Activated CD8-positive, alpha-beta T cell treated with anti-CD3 and anti-CD28 coated beads for 36 hours (primary cell): ENCODE measurements at regions of chr11 and their contacts with region 1.

Region 1: DNA sequence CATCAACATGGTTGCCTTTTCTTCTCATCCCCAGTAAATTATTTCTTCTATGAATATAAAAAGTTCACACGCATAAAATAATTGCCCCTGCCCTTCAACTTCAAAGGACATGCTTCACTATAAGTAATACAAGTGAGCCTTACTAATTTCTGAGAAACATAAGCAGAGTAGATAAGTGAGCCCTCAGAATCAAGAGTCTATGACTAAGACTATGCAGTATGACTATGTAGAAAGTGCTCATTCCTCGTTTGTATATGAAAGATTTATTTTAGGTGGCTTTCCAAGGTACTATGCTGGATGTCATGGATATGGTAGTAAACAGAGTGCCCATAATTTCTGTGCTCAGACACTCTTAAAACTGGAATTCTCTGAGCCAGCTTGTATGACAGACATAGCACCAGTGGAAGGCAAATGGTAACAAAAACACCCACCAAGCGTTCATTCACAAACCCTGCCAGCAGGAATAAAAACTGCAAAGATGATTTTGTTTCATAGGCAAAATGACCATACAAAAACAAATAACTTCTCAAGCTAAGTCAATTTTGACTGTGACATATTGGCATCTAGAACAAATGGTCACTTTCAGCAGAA is 189.8 kb downstream of the CADM1 start:
- DNase-seq: no peak
- ATAC-seq: no peak
- H3K4me3 Mint-ChIP-seq: no peak overlapping the region
- H3K27ac Mint-ChIP-seq: no peak overlapping the region
- H3K4me1 Mint-ChIP-seq: no peaks in the 10 kb centered on the region
- H3K27me3 Mint-ChIP-seq: peaks cover 3% of the 10 kb centered on the region
- CTCF ChIP-seq: no peak

Region 2: GRCh38 chr11:115324581-115325432 is 10.4 kb after region 1 on chr11:
- CTCF ChIA-PET with region 1: interaction called, 12 read pairs
- POLR2A ChIA-PET with region 1: no interaction called
- intact Hi-C with region 1: no loop called
- DNase-seq: peak; percentile 27
- ATAC-seq: peak; percentile 67
- H3K4me3 Mint-ChIP-seq: no peak overlapping the region
- H3K27ac Mint-ChIP-seq: no peak overlapping the region
- H3K4me1 Mint-ChIP-seq: no peaks in the 10 kb centered on the region
- H3K27me3 Mint-ChIP-seq: peaks cover 4% of the 10 kb centered on the region
- CTCF ChIP-seq: peak; percentile 79

Region 3: DNA sequence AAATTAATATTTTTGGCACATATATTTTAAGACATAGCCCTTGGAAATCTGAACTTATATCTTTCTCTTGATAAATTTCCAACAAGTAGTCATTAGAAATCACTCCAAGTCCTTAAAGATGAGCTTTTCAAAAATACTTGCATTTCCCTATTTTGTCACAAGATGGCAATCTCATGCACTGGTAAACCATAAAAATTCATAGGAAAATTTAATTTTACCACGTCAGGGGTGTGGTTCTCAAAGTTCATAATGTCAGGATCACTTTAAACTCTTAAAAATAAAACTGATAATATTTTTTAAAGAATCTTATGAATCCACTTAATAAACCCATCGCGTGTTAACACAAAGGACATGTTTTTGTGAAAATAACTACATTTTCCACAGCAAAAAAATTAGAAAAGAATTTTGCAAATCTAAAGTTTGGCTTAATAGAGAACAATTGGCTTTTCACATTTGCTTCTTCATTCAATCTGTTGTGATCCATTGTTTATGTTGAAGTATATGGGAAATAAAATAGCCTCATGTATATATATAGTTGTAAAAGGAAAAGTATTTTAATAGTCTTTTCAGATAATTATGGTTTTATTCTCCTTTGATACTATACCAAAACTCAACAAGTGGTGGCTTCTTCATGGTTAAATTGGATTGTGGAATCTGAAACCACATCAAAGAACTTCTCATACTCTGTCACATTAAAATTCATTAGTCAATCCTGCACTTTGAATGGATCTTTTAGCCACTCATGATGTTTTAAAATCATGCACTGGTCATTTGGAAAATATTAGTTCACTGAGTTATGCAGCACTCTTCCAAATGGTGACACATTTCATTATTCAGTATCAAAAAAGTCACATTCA is 20.7 kb after region 1 on chr11:
- CTCF ChIA-PET with region 1: no interaction called
- POLR2A ChIA-PET with region 1: no interaction called
- intact Hi-C with region 1: no loop called
- DNase-seq: no peak
- ATAC-seq: no peak
- H3K4me3 Mint-ChIP-seq: no peak overlapping the region
- H3K27ac Mint-ChIP-seq: no peak overlapping the region
- H3K4me1 Mint-ChIP-seq: no peaks in the 10 kb centered on the region
- H3K27me3 Mint-ChIP-seq: no peaks in the 10 kb centered on the region
- CTCF ChIP-seq: peak; percentile 80

Region 4: GRCh38 chr11:115548878-115549528 is 234.6 kb after region 1 on chr11:
- CTCF ChIA-PET with region 1: no interaction called
- POLR2A ChIA-PET with region 1: no interaction called
- intact Hi-C with region 1: no loop called
- DNase-seq: no peak
- ATAC-seq: no peak
- H3K4me3 Mint-ChIP-seq: no peak overlapping the region
- H3K27ac Mint-ChIP-seq: no peak overlapping the region
- H3K4me1 Mint-ChIP-seq: no peaks in the 10 kb centered on the region
- H3K27me3 Mint-ChIP-seq: peaks cover 1% of the 10 kb centered on the region
- CTCF ChIP-seq: no peak

Region 5: DNA sequence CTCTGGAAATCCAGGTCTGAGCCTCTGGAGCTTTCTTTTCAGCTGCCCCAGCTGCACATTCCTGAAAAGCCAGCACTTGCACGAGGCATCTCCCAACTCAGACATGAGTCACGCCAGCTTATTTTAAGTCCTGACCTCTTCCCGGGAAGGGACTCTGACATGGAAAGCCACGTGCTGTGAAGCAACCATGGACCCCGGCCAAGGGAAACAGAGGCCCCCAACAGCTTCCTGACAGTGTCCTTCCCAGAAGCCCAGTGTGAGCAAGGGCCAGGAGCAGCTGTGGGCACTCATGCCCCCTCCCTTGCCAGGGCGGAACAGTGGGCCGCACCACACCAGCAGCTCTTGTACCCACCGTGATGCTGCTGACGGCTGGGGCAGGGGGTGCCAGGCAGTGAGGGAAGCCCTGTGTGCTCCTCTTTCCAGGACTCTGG is 308.6 kb after region 1 on chr11:
- CTCF ChIA-PET with region 1: no interaction called
- POLR2A ChIA-PET with region 1: no interaction called
- intact Hi-C with region 1: no loop called
- DNase-seq: no peak
- ATAC-seq: no peak
- H3K4me3 Mint-ChIP-seq: no peak overlapping the region
- H3K27ac Mint-ChIP-seq: no peak overlapping the region
- H3K4me1 Mint-ChIP-seq: no peaks in the 10 kb centered on the region
- H3K27me3 Mint-ChIP-seq: no peaks in the 10 kb centered on the region
- CTCF ChIP-seq: no peak

Region 6: GRCh38 chr11:115759622-115760460 is 445.4 kb after region 1 on chr11:
- CTCF ChIA-PET with region 1: no interaction called
- POLR2A ChIA-PET with region 1: no interaction called
- intact Hi-C with region 1: no loop called
- DNase-seq: no peak
- ATAC-seq: no peak
- H3K4me3 Mint-ChIP-seq: no peak overlapping the region
- H3K27ac Mint-ChIP-seq: no peak overlapping the region
- H3K4me1 Mint-ChIP-seq: no peaks in the 10 kb centered on the region
- H3K27me3 Mint-ChIP-seq: peaks cover 25% of the 10 kb centered on the region
- CTCF ChIP-seq: no peak